Heart left ventricle (tissue), 16 donors: ENCODE measurements at regions of chr7 and their contacts with region 1.

Region 1: DNA sequence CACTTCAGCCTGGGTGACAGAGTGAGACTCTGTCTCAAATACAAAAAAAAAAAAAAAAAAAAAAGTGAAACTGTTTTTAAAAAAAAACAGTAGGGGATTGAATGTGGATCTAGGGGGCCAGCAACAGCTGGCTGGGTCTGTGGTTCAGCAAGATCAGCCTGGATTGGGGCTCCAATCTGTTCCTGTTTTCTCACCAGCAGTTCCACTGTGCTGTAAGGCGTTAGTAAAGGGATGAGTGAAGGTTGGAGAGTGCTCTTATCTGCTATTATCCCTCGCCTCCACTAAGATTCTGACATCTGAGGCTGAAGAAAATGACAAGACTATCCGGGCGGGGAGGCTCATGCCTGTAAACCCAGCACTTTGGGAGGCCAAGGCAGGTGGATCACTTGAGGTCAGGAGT is 41.6 kb upstream of the GTF2IRD1 start:
- DNase-seq: peak in 1 of 5 donors; percentile 11
- ATAC-seq: no peak
- H3K4me3 ChIP-seq: no peak overlapping the region
- H3K27ac ChIP-seq: no peak overlapping the region
- H3K4me1 ChIP-seq: no peaks in the 10 kb centered on the region
- H3K27me3 ChIP-seq: peaks cover 0 to under 1% (median 0%) of the 10 kb centered on the region in 9 donors
- CTCF ChIP-seq: no peak
- POLR2A ChIP-seq: no peak

Region 2: DNA sequence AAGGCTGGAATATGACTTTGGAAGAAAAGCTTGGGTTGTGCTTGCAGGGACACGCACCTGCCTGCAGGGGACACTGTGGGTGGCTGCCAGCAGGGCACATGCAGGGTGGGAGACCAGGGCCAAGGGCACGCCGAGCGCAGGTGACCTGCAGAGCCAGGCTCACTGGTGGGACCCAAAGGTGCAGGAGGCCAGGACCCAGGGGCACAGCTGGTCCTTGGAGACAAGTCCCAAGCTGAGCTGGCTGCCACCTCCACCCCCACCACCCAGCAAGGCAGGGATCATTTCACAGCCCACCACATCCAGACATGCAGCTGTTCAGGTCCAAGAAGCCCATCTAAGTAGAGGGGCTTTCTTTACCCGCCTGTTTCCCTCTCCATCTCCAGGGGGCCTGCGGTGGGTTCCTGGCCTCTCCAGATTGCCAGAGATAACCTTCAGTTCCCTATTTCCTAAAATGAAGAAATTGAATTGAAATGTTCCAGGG is 136.6 kb before region 1 on chr7:
- intact Hi-C with region 1: no loop called
- DNase-seq: no peak
- ATAC-seq: no peak
- H3K4me3 ChIP-seq: no peak overlapping the region
- H3K27ac ChIP-seq: peak overlapping the region in 1 of 12 donors; percentile 24
- H3K4me1 ChIP-seq: peaks cover 0 to 41% (median 24%) of the 10 kb centered on the region in 12 donors
- H3K27me3 ChIP-seq: no peaks in the 10 kb centered on the region
- CTCF ChIP-seq: peak; percentile 11 to 52 (median 36)
- POLR2A ChIP-seq: no peak

Region 3: GRCh38 chr7:74569501-74570075 is 157.5 kb after region 1 on chr7:
- intact Hi-C with region 1: loop called in 7 of 10 experiments (anchors 2 to 10 kb)
- DNase-seq: no peak
- ATAC-seq: no peak
- H3K4me3 ChIP-seq: no peak overlapping the region
- H3K27ac ChIP-seq: no peak overlapping the region
- H3K4me1 ChIP-seq: peaks cover 0 to 6% (median 0%) of the 10 kb centered on the region in 12 donors
- H3K27me3 ChIP-seq: no peaks in the 10 kb centered on the region
- CTCF ChIP-seq: no peak
- POLR2A ChIP-seq: no peak

Region 4: DNA sequence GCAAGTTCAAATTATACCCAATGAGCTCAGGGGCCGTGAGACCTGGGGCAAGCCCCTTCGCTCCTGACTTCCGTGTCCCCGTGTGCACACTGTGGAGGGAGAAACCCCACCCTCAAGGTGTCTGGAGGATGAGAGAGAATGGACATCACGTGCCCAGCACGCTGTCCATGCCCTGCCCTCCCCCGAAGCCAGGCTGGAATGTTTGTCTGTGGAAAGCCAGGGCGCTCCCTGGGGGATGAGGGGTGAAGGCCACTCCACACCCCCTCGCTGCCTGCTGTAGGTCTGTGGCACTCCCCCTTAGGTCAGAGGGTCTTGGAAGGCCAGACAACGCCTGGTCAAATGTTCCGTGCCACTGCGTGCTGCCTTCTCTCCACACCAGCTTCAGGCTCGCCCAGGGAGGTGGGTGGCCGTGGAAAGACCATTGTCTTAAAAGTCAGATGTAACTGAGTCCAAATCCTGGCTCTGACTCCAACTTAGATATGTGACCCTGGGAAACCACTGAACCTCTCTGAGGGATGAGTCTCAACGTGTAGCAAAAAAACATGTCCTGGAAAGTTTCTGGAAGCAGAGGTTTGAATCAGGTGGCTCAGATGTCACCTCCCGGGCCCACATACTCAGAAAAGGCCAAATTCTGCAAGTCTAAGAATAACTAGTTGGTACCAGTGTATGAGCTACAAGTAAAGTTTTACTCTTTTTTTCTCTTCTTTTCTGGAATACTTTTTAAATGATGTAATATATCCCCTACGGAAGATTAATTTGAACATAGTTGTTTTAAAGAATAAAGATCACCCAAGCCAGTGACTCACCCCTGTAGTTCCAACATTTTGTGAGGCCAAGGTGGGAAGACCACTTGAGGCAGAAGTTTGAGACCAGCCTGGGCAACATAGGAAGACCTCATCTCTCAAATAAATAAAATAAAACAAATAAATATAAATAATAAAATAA is 636.7 kb after region 1 on chr7:
- intact Hi-C with region 1: loop called in 2 of 10 experiments (anchors 5 kb)
- DNase-seq: no peak
- ATAC-seq: no peak
- H3K4me3 ChIP-seq: no peak overlapping the region
- H3K27ac ChIP-seq: no peak overlapping the region
- H3K4me1 ChIP-seq: peaks cover 0 to 12% (median 0%) of the 10 kb centered on the region in 12 donors
- H3K27me3 ChIP-seq: no peaks in the 10 kb centered on the region
- CTCF ChIP-seq: no peak
- POLR2A ChIP-seq: no peak